A549 (cell line): ENCODE measurements at regions of chr7 and their contacts with region 1.

Region 1: GRCh38 chr7:50467817-50468610 is 17.9 kb upstream of the FIGNL1 start:
- DNase-seq: peak; percentile 60 to 71
- ATAC-seq: peak; percentile 86 to 94
- H3K4me3 ChIP-seq: no peak overlapping the region; the same call in 2 of the 3 replicates
- H3K27ac ChIP-seq: peak overlapping the region; percentile 19 to 67; a peak in 4 of 6 replicates
- H3K4me1 ChIP-seq: 0 out of 3 replicates have a peak, but pooled peaks cover 3% of the 10 kb centered on the region
- CTCF ChIP-seq: peak; percentile 88
- EP300 ChIP-seq: no peak
- POLR2A ChIP-seq: no peak
- RAD21 ChIP-seq: peak; percentile 96 to 97

Region 2: DNA sequence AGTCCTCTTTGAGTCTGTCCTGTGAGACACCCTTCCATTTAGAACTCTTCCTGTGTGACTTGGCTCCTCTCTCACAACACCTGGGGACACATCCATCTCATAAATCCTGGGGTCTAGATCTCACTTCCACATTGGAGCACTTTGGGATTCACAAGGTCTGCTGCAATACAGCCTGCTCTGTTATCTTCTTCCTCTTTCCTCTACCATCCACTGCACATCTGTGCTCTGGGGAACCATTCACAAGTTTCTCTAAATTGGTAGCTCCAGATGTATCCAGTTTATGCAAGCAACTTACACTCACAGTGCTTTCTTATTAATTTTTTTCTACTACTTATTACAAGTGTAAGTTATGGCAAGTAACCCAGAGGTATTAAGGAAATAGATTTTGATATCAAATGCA is 12.4 kb before region 1 on chr7:
- CTCF ChIA-PET with region 1: interaction called, 17 read pairs
- POLR2A ChIA-PET with region 1: no interaction called
- DNase-seq: no peak
- ATAC-seq: no peak
- H3K4me3 ChIP-seq: no peak overlapping the region
- H3K27ac ChIP-seq: no peak overlapping the region
- H3K4me1 ChIP-seq: peaks cover 3% of the 10 kb centered on the region; the same call in 1 of the 3 replicates
- CTCF ChIP-seq: no peak
- EP300 ChIP-seq: no peak
- POLR2A ChIP-seq: no peak
- RAD21 ChIP-seq: no peak

Region 3: DNA sequence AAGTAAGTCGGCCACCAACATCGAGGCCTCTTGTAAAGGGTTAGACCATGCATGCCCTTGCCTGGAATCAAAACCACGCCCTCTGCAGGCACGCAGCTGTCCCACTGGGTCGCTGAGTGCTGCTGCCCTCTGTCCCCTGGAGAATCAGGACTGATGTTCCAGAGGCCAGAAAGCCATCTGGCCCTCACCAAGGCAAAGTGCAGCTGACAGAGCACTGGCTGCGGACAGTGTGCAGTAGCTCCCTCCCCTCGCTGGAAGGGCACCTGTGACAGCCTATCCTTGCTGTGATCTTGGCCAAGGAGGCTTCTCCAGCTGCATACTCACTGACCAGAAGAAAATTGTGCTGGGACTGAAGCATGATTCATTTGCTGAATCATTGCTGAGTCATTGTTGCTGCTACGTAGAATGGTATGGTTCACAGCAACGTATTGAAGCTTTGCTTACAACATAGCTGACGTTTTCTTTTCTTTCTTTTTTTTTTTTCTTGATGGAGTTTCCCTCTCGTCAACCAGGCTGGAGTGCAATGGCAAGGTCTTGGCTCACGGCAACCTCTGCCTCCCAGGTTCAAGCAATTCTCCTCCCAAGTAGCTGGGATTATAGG is 66.8 kb after region 1 on chr7:
- CTCF ChIA-PET with region 1: interaction called, 15 read pairs
- POLR2A ChIA-PET with region 1: no interaction called
- DNase-seq: peak; percentile 87 to 96
- ATAC-seq: peak; percentile 97 to 98
- H3K4me3 ChIP-seq: no peak overlapping the region
- H3K27ac ChIP-seq: peak overlapping the region; percentile 90 to 91
- H3K4me1 ChIP-seq: peaks cover 39% of the 10 kb centered on the region
- CTCF ChIP-seq: no peak
- EP300 ChIP-seq: no peak
- POLR2A ChIP-seq: no peak
- RAD21 ChIP-seq: peak in 1 of 2 experiments; percentile 5; a peak in 1 of 5 replicates

Region 4: DNA sequence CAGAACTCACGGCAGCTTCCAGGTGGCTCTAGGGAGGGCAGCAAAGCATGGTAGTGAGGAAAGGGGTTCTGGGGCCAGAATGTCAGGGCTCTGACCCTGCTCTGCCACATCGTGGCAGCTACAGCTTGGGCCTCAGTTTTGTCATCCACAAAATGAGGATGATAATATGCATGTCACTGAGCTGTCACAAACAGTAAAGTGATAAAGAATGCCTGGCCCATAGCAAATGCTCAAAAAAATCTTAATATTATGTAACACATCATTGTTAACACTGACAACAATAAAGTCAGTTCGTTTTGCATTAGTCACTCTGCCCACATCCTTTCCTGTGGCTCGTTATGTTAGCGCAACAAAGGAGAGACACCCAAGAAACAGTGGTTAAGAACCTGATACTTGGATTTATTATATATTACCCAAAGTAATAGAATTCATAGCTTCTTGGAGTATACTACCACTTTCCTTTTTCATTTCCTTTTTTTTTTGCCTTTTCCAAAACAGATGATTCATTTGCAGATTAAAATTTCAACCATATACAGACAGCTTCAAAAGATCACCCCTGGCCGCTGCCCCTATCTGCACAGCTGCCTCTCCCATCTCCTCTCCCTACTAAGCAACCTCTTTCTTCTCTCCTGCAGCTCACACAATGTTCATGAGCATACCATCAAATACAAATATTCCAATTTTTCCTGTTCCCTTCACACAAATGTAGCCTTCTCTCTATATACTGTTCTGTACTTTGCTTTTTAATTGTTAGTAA is 142.7 kb after region 1 on chr7:
- CTCF ChIA-PET with region 1: interaction called, 12 read pairs
- POLR2A ChIA-PET with region 1: no interaction called
- DNase-seq: no peak
- ATAC-seq: no peak
- H3K4me3 ChIP-seq: no peak overlapping the region
- H3K27ac ChIP-seq: no peak overlapping the region
- H3K4me1 ChIP-seq: no peaks in the 10 kb centered on the region
- CTCF ChIP-seq: no peak
- EP300 ChIP-seq: no peak
- POLR2A ChIP-seq: no peak
- RAD21 ChIP-seq: no peak

Region 5: DNA sequence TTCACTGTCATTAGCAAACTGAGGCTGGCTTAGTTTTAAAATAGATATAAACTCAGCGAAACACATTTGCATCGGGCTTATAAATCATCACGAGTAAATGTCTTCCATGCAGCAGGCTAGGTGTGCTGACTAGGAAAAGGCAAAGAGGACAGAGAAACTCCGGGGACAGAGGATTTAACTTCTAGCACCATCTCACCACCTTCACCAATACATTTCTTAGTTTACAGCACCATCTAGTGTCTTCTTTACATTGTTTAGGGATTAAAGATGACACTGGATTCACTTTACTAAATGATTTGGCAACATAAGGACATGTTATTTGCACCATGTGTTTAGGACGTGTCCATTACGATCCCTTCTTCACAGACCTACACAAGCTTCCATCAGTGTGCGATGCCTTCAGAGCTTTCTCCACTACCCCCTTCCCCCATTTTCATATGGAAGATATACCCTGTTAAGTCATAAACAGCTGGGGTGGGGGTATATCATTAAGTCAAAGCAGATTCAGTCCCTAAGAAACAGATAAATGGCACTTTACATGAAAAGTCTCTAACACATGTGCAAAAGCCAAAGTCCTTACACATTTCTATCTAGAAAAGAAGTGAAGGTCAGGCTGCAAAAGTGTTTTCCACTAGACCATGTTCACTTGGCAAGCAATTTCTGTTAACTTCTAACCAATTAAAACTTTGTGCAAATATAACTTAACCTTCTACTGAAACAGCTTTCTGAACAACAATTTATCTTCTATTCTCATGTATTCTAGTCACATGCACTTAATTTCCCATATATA is 211.4 kb after region 1 on chr7:
- CTCF ChIA-PET with region 1: interaction called, 34 read pairs
- POLR2A ChIA-PET with region 1: no interaction called
- DNase-seq: peak; percentile 41 to 56
- ATAC-seq: peak; percentile 78 to 88
- H3K4me3 ChIP-seq: no peak overlapping the region
- H3K27ac ChIP-seq: no peak overlapping the region
- H3K4me1 ChIP-seq: peaks cover 7% of the 10 kb centered on the region; the same call in 1 of the 3 replicates
- CTCF ChIP-seq: peak; percentile 54; the same call in 2 of the 3 replicates
- EP300 ChIP-seq: no peak
- POLR2A ChIP-seq: no peak
- RAD21 ChIP-seq: peak; percentile 64 to 65

Region 6: DNA sequence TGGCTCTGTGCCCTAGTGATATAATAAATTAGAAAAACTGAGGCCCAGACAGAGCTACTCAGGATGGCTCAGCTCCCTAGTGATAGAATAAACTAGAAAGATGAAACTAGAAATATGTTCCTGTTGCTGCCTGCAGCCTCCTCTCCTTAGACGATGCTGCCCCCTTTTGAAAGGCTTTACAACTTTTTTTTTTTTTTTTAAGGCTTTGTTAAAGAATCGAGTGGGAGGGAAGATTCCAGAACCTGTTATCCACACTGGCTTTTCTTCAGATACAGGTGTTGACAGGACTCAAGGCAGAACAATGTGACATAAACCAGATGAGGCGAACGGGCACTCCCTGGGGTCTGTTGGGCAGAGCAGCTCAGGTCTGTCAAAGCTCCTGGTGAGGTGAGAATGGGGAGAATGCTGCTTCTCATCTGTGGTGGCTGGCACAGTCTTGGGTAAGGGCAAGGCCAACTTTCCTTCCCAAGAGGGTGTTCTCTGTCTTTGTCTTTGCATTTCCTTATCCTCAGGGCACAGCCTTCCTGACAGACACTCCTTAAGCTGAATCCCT is 673.5 kb after region 1 on chr7:
- CTCF ChIA-PET with region 1: interaction called, 145 read pairs
- POLR2A ChIA-PET with region 1: no interaction called
- DNase-seq: peak; percentile 13 to 41
- ATAC-seq: peak; percentile 62 to 72; a peak in 5 of 6 replicates
- H3K4me3 ChIP-seq: no peak overlapping the region
- H3K27ac ChIP-seq: no peak overlapping the region
- H3K4me1 ChIP-seq: peaks cover 8% of the 10 kb centered on the region
- CTCF ChIP-seq: peak; percentile 77
- EP300 ChIP-seq: no peak
- POLR2A ChIP-seq: no peak
- RAD21 ChIP-seq: peak; percentile 92 to 93